Activated CD4-positive, alpha-beta T cell treated with anti-CD3 and anti-CD28 coated beads, Interleukin-2, amount 10 ng/mL, durations not matched to agents 24 days and 14 days (primary cell): ENCODE measurements at regions of chr3 and their contacts with region 1.

Region 1: GRCh38 chr3:183122257-183122932 is 23.1 kb upstream of the MCCC1 start:
- DNase-seq: peak; percentile 68
- H3K4me3 Mint-ChIP-seq: no peak overlapping the region
- H3K27ac Mint-ChIP-seq: no peak overlapping the region
- H3K4me1 Mint-ChIP-seq: peaks cover 7% of the 10 kb centered on the region
- H3K27me3 Mint-ChIP-seq: peaks cover 4% of the 10 kb centered on the region

Region 2: GRCh38 chr3:183064475-183064874 is 57.9 kb before region 1 on chr3:
- intact Hi-C with region 1: no loop called
- DNase-seq: no peak
- H3K4me3 Mint-ChIP-seq: no peak overlapping the region
- H3K27ac Mint-ChIP-seq: no peak overlapping the region
- H3K4me1 Mint-ChIP-seq: no peaks in the 10 kb centered on the region
- H3K27me3 Mint-ChIP-seq: no peaks in the 10 kb centered on the region

Region 3: DNA sequence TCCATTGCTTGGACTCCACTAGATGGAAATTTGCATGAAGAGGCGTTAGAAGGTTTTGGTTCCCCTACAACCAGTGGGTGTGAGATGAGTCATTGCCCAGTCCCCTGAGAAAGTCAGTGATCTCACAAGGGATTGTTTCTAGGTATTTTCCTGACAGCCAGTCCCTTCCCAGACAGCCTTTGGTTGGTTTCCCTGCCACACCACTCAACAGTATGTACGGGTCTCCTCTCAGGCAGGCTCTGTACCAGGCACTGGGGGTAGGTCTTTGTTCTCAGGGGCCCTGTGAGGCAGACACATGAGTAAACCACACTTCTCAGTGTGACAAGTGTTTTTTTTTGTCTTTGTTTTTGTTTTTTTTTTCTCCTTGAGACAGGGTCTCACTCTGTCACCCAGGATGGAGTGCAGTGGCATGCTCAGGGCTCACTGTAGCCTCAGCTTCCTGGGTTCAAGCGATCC is 36.2 kb after region 1 on chr3:
- intact Hi-C with region 1: loop called (anchors 2 kb)
- DNase-seq: peak; percentile 71
- H3K4me3 Mint-ChIP-seq: peak overlapping the region; percentile 44
- H3K27ac Mint-ChIP-seq: peak overlapping the region; percentile 81
- H3K4me1 Mint-ChIP-seq: peaks cover 39% of the 10 kb centered on the region
- H3K27me3 Mint-ChIP-seq: no peaks in the 10 kb centered on the region

Region 4: DNA sequence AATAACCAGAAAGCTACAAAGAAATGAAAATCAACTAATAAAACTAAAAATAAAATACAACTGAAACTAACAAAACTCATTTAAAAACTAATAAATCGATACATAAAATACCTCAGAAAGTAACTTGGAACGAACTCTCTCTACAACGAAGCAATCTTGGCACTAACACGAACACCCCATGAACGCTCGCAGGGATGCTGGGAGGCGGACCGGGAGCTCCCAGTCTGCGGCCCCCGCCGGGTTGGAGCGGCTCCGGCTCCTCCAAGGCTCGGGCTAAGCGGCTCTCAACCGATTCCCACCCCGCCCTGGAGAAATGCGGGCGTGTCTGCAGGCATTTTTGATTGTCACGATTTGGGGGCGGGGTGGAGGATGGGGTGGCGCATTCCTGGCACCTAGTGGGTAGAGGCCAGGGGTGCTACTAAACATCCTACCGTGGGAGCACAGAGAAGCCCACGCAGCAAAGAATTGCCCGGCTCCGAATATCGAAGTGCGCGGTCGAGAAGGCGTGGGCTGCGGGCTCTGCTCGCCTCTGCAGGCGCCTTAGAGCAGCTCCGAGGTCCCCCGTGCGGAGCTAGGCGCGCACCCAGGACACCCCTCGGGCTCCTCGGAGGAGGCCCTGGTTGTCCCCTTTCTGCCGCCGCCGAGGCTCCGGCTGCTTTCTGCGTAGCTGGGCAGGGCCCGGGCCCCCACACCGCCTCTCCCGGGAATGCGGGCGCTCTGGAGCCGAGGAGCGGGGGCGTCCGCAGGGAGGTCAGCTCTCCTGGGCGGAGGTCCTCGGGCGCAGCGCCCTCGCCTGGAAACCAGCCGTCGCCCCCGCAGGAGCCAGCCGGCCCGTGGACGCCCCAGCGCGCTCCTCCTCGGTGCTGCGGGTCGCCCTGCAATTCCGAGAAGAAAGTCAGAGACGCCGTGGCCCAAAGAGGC is 56.5 kb after region 1 on chr3:
- intact Hi-C with region 1: loop called (anchors 1 kb)
- DNase-seq: peak; percentile 79
- H3K4me3 Mint-ChIP-seq: peak overlapping the region; percentile 86
- H3K27ac Mint-ChIP-seq: no peak overlapping the region
- H3K4me1 Mint-ChIP-seq: peaks cover 10% of the 10 kb centered on the region
- H3K27me3 Mint-ChIP-seq: peaks cover 37% of the 10 kb centered on the region

Region 5: DNA sequence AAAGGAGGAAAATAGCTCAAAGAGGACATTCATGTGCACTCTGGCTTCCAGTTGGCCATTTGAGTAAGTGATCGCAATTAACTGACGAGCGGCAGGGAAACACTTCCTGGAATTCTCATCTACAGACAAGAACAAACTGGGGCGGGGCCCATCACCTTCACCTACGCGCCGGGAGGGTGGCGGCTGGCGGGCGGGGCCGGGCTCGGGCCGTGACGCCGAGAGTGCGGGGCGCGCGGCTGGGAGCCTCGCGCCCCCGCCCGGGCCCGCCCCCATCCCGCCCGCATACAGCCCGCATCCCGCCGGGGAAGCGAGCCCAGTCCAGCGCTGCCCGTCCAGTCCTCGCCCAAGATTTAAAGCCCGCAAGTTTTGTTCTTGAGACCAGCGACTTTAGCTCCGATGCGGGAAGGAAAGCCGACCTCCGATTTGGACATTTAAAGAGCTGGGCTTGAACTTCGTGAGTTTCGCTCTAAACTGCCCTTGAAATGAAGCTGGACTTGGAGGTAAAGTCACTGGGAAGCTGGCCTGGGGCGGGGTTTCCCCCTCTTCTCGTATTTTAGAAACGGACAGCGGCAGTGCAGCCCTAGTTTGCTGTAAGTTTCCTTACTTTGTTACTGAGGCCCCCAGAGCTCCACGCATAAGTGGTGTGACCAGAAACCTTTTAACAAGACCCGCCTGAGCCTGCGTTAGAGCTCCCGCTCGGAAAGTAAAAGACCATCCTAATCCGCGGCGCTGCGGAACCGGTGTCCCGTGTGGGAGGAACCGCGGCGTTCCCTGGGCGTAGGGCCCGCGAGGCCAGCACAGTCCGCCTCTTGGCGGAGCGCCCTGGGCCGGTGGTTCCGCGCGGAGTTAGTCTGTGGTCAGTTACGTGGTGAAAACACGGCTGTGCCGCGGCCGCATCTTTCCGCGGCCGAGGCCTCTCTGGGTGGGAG is 130.8 kb after region 1 on chr3 and contains the start of gene B3GNT5:
- intact Hi-C with region 1: loop called (anchors 2 kb)
- DNase-seq: peak; percentile 81
- H3K4me3 Mint-ChIP-seq: peak within 1 kb of the TSS; percentile 84
- H3K27ac Mint-ChIP-seq: peak within 1 kb of the TSS; percentile 72
- H3K4me1 Mint-ChIP-seq: peaks cover 16% of the 10 kb centered on the region
- H3K27me3 Mint-ChIP-seq: peaks cover 12% of the 10 kb centered on the region
- total RNA-seq, gene B3GNT5: 25.0 and 27.9 TPM in 2 replicates

Region 6: GRCh38 chr3:183377307-183377959 is 255.0 kb after region 1 on chr3:
- intact Hi-C with region 1: loop called (anchors 1 kb)
- DNase-seq: no peak
- H3K4me3 Mint-ChIP-seq: no peak overlapping the region
- H3K27ac Mint-ChIP-seq: peak overlapping the region; percentile 71
- H3K4me1 Mint-ChIP-seq: peaks cover 25% of the 10 kb centered on the region
- H3K27me3 Mint-ChIP-seq: no peaks in the 10 kb centered on the region

Region 7: GRCh38 chr3:183385698-183386613 is 263.6 kb after region 1 on chr3:
- intact Hi-C with region 1: loop called (anchors 1 kb)
- DNase-seq: peak; percentile 89
- H3K4me3 Mint-ChIP-seq: no peak overlapping the region
- H3K27ac Mint-ChIP-seq: no peak overlapping the region
- H3K4me1 Mint-ChIP-seq: peaks cover 16% of the 10 kb centered on the region
- H3K27me3 Mint-ChIP-seq: no peaks in the 10 kb centered on the region

Region 8: GRCh38 chr3:183884427-183885296 is 762.3 kb after region 1 on chr3 and contains the start of gene PARL:
- intact Hi-C with region 1: loop called (anchors 5 kb)
- DNase-seq: peak; percentile 99
- H3K4me3 Mint-ChIP-seq: peak within 1 kb of the TSS; percentile 94
- H3K27ac Mint-ChIP-seq: peak within 1 kb of the TSS; percentile 93
- H3K4me1 Mint-ChIP-seq: peaks cover 23% of the 10 kb centered on the region
- H3K27me3 Mint-ChIP-seq: peaks cover 2% of the 10 kb centered on the region
- total RNA-seq, gene PARL: 89.5 and 91.4 TPM in 2 replicates